PC-9 (cell line): ENCODE measurements at regions of chr19 and their contacts with region 1.

Region 1: DNA sequence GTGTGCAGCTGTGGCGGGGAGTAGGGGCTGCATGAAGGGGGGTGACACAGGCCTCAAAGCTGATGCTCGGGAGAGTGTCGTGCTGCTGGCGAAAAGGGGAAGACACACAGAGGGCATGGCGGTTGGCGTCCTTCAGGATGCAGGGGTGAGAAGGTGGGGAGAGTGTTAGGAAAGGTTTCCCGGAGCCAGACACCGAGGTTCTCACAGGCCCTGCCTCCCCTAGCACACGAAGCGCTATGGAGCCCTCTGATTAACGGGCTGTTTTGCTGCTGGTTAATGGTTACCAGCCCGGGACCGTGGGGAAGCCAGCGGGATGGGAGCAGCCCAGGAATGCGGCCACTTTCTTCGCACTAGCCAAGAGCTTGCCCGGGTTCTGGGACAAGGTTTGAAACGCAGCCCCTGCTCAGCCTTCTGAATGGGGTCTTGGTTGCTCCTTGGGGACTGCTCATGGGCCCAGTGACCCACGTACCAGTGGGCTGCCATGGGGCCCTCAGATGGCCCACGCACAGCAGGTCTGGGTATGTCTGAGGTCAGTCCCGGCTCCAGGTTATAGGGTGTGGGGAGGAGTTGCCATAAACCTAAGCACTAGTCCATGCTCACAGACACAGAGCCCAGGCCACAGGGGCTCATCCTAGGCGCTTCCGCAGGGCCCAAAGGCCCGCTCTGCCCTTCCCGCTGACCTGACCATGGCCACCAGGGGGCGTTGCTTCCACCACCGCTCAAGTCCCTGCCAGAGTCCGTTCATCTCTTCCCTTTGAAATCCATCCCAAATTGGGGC is 31.3 kb upstream of the ISYNA1 start:
- DNase-seq: no peak
- H3K4me3 ChIP-seq: no peak overlapping the region
- H3K27ac ChIP-seq: no peak overlapping the region
- H3K4me1 ChIP-seq: 0 out of 2 replicates have a peak, but pooled peaks cover 5% of the 10 kb centered on the region
- H3K27me3 ChIP-seq: no peaks in the 10 kb centered on the region
- CTCF ChIP-seq: peak; percentile 75

Region 2: DNA sequence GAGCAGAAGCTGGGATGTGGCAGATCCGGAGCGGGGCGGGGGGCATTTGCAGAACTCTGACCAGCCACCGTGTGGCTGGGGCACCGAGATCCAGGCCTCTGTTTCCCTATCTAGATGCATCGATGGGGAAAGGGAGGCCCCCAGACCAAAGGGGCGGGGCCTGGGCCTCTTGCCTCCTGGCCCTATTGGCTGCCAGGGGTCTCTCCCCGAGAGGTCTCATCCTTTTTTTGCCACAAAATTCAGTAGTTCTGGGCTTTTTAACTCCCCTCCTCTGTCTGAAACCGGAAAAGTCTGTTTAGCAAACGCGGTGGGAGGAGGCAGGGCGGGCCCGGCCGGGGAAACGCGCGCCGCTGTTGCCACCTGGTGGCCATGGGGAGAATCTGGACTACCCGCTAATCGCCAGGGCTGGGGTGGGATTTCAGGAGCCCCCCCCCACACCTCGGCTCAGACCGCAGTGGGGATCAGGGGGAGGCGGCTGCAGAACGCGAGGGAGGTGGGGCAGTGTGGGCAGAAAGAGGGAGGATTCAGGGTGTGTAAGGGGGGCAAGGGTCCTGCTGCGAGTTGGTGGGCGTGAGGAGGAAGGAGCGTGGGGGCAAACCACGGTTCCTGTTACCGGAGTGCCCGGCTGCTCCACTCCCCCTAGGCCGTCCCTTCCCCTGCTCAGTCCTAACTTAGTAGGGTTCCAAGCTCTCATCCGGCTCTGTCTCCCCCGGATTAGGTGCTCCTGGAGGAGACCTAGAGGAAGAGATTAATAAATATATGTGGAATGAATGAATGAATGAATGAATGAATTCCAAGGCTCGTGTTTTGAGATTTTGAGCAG is 410.8 kb before region 1 on chr19:
- CTCF ChIA-PET with region 1: no interaction called
- POLR2A ChIA-PET with region 1: no interaction called
- intact Hi-C with region 1: no loop called
- DNase-seq: peak; percentile 55 to 77
- H3K4me3 ChIP-seq: no peak overlapping the region
- H3K27ac ChIP-seq: no peak overlapping the region
- H3K4me1 ChIP-seq: no peaks in the 10 kb centered on the region; the same call in 1 of the 2 replicates
- H3K27me3 ChIP-seq: no peaks in the 10 kb centered on the region
- CTCF ChIP-seq: peak; percentile 99

Region 3: DNA sequence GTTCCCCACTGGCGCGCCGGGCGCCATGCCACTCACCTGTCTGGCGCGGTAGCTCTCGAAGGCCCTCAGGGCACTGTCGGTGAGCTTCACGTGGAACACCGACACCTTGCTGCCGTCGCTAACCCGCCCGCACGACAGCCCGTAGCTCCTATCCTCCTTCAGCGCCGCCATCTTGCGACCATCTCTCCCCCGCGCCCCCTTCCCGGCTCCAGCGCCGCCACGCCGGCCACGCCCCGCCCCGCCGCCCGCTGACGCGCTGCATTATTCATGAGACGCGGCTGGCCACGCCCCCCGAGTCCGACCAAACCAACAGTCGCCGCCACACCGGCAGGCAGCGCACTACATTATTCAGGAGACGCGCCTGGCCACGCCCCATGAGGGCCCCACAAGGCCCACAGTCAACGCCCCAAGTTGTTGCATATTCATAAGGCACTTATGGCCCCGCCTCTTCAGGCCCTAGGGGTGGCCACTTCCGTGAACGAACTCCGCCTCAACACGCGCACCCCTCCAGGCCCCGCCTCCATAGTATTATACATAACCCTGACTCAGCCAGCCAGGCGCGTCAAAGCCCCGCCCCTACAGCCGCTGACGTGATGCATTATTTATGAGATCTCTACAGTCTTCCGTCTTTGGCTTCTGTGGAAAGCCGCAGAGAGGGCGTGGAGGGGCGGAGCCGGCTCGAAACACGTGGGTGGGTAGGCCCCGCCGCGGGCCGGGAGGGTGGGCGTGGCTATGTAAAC is 52.8 kb after region 1 on chr19 and contains the start of gene ELL:
- CTCF ChIA-PET with region 1: no interaction called
- POLR2A ChIA-PET with region 1: no interaction called
- intact Hi-C with region 1: loop called (anchors 5 kb)
- DNase-seq: peak; percentile 99
- H3K4me3 ChIP-seq: peak within 1 kb of the TSS; percentile 94
- H3K27ac ChIP-seq: peak within 1 kb of the TSS; percentile 75
- H3K4me1 ChIP-seq: peaks cover 31% of the 10 kb centered on the region
- H3K27me3 ChIP-seq: no peaks in the 10 kb centered on the region
- CTCF ChIP-seq: no peak
- total RNA-seq, gene ELL: 12.9 and 14.6 TPM in 2 replicates